Heart left ventricle (tissue), 16 donors: ENCODE measurements at regions of chr5 and their contacts with region 1.

Region 1: DNA sequence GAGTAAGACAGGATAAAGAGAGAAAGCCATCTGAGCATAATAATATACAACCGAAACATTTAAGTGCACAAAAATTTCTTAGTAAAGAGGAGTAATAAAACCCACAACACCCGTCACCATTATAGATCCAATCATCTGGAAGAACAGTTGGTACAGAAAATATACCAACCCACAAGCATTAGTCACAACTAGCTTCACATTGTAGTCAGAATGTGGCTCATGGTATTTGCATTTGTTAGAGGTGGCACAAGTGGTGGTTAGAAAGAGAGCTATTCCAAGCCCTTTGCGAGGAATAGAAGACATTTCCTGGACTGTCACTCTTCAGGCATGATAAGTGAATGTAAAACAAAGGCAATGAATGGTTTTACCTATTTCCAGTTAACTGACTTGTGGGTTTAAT is 677.5 kb upstream of the ST8SIA4 start:
- DNase-seq: no peak
- ATAC-seq: no peak
- H3K4me3 ChIP-seq: no peak overlapping the region
- H3K27ac ChIP-seq: no peak overlapping the region
- H3K4me1 ChIP-seq: no peaks in the 10 kb centered on the region
- H3K27me3 ChIP-seq: no peaks in the 10 kb centered on the region
- CTCF ChIP-seq: no peak
- POLR2A ChIP-seq: no peak

Region 2: GRCh38 chr5:100322483-100322882 is 1258.1 kb before region 1 on chr5:
- intact Hi-C with region 1: loop called in 1 of 10 experiments (anchors 10 kb)
- DNase-seq: no peak
- ATAC-seq: no peak
- H3K4me3 ChIP-seq: no peak overlapping the region
- H3K27ac ChIP-seq: no peak overlapping the region
- H3K4me1 ChIP-seq: no peaks in the 10 kb centered on the region
- H3K27me3 ChIP-seq: no peaks in the 10 kb centered on the region
- CTCF ChIP-seq: no peak
- POLR2A ChIP-seq: no peak